HepG2 (cell line): ENCODE measurements at regions of chr2 and their contacts with region 1.

Region 1: GRCh38 chr2:173965329-173966025 is at the start of gene SP3:
- DNase-seq: peak; percentile 96
- ATAC-seq: peak; percentile 89
- H3K4me3 ChIP-seq: peak within 1 kb of the TSS; percentile 85 to 99 (median 98)
- H3K27ac ChIP-seq: peak within 1 kb of the TSS; percentile 95
- H3K4me1 ChIP-seq: peaks cover 49% of the 10 kb centered on the region
- H3K27me3 ChIP-seq: no peaks in the 10 kb centered on the region; a peak in 1 of 5 replicates
- CTCF ChIP-seq: peak; percentile 28
- EP300 ChIP-seq: no peak
- POLR2A ChIP-seq: peak; percentile 69 to 74; a peak in 3 of 4 replicates
- RAD21 ChIP-seq: peak; percentile 81
- total RNA-seq, gene SP3: 132 and 171 TPM in 2 replicates

Region 2: GRCh38 chr2:173872711-173873412 is 92.6 kb before region 1 on chr2:
- CTCF ChIA-PET with region 1: no interaction called
- POLR2A ChIA-PET with region 1: no interaction called
- in situ Hi-C with region 1: no loop called
- intact Hi-C with region 1: no loop called
- DNase-seq: no peak
- ATAC-seq: no peak
- H3K4me3 ChIP-seq: no peak overlapping the region
- H3K27ac ChIP-seq: no peak overlapping the region
- H3K4me1 ChIP-seq: no peaks in the 10 kb centered on the region
- H3K27me3 ChIP-seq: peaks cover 0 to 37% of the 10 kb centered on the region in 2 experiments; a peak in 3 of 5 replicates
- CTCF ChIP-seq: no peak
- EP300 ChIP-seq: no peak
- POLR2A ChIP-seq: no peak
- RAD21 ChIP-seq: no peak

Region 3: DNA sequence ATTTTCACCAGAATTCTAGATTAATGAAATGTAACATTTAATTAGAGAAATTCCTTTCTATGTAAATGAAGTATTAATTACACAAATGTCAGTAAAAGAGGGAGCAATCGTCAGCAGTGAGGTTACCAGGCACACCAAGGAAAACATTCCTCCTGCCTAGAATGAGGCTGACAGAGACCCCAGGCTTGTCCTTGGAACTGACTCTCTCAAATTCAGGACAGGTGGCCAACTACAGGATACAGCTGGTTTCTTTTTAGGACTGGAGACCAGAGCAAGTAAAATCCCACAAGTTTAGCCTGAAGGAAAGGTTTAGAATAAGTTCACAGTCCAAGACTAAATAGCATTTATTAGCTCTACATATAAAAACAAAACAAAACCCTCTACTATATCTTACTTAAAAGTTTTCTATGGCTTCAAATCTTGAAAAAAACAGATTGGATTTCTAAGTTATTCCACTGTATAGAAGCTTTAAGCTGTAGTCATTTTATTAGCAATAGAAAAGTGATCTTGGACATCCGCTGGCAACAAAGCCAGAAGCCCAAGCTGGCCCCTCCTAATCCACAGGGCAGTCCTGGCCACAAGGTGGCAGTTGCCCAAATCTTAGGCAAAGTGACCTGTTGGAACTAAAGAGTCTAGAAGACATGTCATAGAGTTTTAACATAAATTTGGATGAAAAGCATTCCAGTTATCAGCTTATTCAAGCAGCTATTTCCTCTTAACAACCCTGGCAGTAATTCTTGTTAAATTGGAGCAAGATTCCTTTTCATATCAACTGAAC is 81.3 kb before region 1 on chr2:
- CTCF ChIA-PET with region 1: no interaction called
- POLR2A ChIA-PET with region 1: no interaction called
- in situ Hi-C with region 1: no loop called
- intact Hi-C with region 1: loop called (anchors 1 kb)
- DNase-seq: peak; percentile 56
- ATAC-seq: peak; percentile 93
- H3K4me3 ChIP-seq: no peak overlapping the region
- H3K27ac ChIP-seq: no peak overlapping the region
- H3K4me1 ChIP-seq: no peaks in the 10 kb centered on the region
- H3K27me3 ChIP-seq: peaks cover 0 to 25% of the 10 kb centered on the region in 2 experiments; a peak in 2 of 5 replicates
- CTCF ChIP-seq: peak; percentile 77
- EP300 ChIP-seq: no peak
- POLR2A ChIP-seq: no peak
- RAD21 ChIP-seq: peak; percentile 64

Region 4: GRCh38 chr2:173922760-173923159 is 42.7 kb before region 1 on chr2:
- CTCF ChIA-PET with region 1: no interaction called
- POLR2A ChIA-PET with region 1: no interaction called
- in situ Hi-C with region 1: no loop called
- intact Hi-C with region 1: loop called (anchors 5 kb)
- DNase-seq: no peak
- ATAC-seq: peak; percentile 23; the same call in 1 of the 3 replicates
- H3K4me3 ChIP-seq: no peak overlapping the region
- H3K27ac ChIP-seq: no peak overlapping the region
- H3K4me1 ChIP-seq: no peaks in the 10 kb centered on the region
- H3K27me3 ChIP-seq: no peaks in the 10 kb centered on the region
- CTCF ChIP-seq: no peak
- EP300 ChIP-seq: no peak
- POLR2A ChIP-seq: no peak
- RAD21 ChIP-seq: no peak

Region 5: GRCh38 chr2:174004905-174005605 is 39.6 kb after region 1 on chr2:
- CTCF ChIA-PET with region 1: interaction called, 4 read pairs
- POLR2A ChIA-PET with region 1: no interaction called
- in situ Hi-C with region 1: no loop called
- intact Hi-C with region 1: loop called (anchors 5 kb)
- DNase-seq: no peak
- ATAC-seq: no peak
- H3K4me3 ChIP-seq: no peak overlapping the region
- H3K27ac ChIP-seq: no peak overlapping the region
- H3K4me1 ChIP-seq: peaks cover 27% of the 10 kb centered on the region
- H3K27me3 ChIP-seq: no peaks in the 10 kb centered on the region
- CTCF ChIP-seq: no peak
- EP300 ChIP-seq: no peak
- POLR2A ChIP-seq: no peak
- RAD21 ChIP-seq: no peak

Region 6: DNA sequence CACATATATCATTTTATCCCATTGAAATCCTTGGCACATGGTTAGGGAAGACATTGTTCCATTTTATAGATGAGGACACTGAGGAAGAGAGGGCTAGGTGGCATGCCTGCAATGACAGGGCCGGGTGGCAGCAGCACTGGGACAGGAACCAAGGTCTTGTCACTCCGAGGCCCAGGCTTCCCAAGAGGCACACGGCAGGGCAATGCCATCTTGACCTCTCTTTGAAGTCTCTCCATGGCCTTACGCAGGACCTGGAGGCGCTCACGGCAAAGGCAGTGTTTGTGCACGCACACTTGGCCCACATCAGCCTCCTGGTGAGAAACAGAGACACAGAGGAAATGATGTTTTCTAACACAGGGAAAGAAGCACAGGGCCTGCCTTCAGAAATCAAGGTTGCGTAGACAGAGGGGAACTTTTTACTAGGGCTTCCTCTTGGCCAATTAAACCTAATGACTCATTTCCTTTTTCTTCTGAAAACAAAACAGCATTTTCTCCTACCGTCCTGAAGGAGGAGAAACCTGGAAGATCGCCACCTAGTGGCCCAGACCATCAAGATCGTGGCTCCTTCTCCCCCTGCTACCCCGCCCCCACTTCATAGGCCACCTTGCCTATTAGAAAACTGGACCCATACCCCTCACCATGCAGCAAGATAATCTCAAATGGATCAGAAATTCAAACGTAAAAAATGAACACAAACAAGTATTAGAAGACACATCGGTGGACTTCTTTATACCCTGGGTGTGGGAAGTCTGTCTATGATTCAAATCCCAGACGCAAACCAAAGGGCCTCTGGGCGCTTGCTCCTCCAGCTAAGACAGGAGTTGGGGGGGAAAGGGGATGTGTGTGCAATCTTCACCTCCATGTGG is 74.3 kb after region 1 on chr2:
- CTCF ChIA-PET with region 1: no interaction called
- POLR2A ChIA-PET with region 1: no interaction called
- in situ Hi-C with region 1: no loop called
- intact Hi-C with region 1: loop called (anchors 5 kb)
- DNase-seq: peak; percentile 88
- ATAC-seq: peak; percentile 90
- H3K4me3 ChIP-seq: peak overlapping the region; percentile 48 to 73 (median 54)
- H3K27ac ChIP-seq: peak overlapping the region; percentile 1
- H3K4me1 ChIP-seq: peaks cover 23% of the 10 kb centered on the region
- H3K27me3 ChIP-seq: peaks cover 0 to 4% of the 10 kb centered on the region in 2 experiments; a peak in 2 of 5 replicates
- CTCF ChIP-seq: peak; percentile 91
- EP300 ChIP-seq: no peak
- POLR2A ChIP-seq: no peak
- RAD21 ChIP-seq: peak; percentile 66

Region 7: GRCh38 chr2:174341286-174341994 is 376.0 kb after region 1 on chr2:
- CTCF ChIA-PET with region 1: no interaction called
- POLR2A ChIA-PET with region 1: no interaction called
- in situ Hi-C with region 1: no loop called
- intact Hi-C with region 1: loop called (anchors 5 kb)
- DNase-seq: peak; percentile 67
- ATAC-seq: peak; percentile 68
- H3K4me3 ChIP-seq: peak overlapping the region; percentile 48 to 70 (median 59)
- H3K27ac ChIP-seq: no peak overlapping the region
- H3K4me1 ChIP-seq: peaks cover 55% of the 10 kb centered on the region
- H3K27me3 ChIP-seq: peaks cover 21 to 74% of the 10 kb centered on the region in 2 experiments; a peak in 4 of 5 replicates
- CTCF ChIP-seq: peak; percentile 96
- EP300 ChIP-seq: no peak
- POLR2A ChIP-seq: no peak
- RAD21 ChIP-seq: peak; percentile 91